CD14-positive monocyte (primary cell): ENCODE measurements at regions of chr2 and their contacts with region 1.

Region 1: GRCh38 chr2:73828818-73829570 is at the start of gene STAMBP:
- DNase-seq: peak; percentile 92 to 97 (median 95)
- H3K4me3 ChIP-seq: peak within 1 kb of the TSS; percentile 61 to 83 (median 69)
- H3K4me3 Mint-ChIP-seq: peak within 1 kb of the TSS; percentile 92 to 96
- H3K27ac ChIP-seq: peak within 1 kb of the TSS; percentile 79 to 94
- H3K27ac Mint-ChIP-seq: peak within 1 kb of the TSS; percentile 94 to 99 (median 98)
- H3K4me1 ChIP-seq: peaks cover 14 to 26% of the 10 kb centered on the region in 2 donors
- H3K4me1 Mint-ChIP-seq: peaks cover 25% of the 10 kb centered on the region
- H3K27me3 ChIP-seq: no peaks in the 10 kb centered on the region
- H3K27me3 Mint-ChIP-seq: peaks cover 0 to 2% (median 2%) of the 10 kb centered on the region in 3 donors
- CTCF ChIP-seq: no peak
- polyA plus RNA-seq, gene STAMBP: 26.0 to 40.8 (median 40.7) TPM

Region 2: DNA sequence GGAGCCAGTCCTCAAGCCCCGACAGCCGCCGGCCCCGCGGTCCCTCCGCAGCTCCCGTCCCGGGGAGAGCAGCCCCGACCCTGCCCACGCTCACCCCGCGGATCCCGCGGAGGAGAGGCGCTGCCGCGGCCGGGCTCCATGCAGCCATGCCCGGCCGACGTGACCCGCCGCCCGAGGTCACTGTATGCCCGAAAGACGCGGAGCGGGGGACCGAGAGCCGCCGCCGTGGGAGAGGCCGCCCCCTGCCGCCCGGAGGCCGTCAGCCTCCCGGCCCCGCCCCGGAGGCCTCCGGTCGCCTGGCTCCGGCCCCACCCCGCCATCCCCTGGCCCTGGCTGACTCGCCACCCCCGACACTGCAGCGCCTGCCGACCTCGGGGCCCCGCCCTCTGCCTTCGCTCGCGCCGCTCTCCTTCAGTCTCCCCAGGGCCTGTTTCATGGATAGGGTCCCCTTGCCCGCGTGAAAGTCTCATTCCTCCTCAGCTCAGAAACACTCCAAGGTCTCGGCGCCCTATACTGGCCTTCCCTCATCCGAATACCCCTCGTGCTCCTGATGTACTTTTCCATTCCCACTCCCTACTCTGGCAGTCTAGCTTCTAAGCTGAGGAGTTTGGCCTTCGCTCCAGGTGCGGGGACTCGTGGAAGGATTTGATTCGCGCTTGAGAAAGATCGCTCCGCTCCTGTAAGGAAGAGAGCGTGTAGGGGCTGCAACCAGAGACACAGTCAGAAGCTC is 318.9 kb after region 1 on chr2 and contains the start of gene BOLA3:
- intact Hi-C with region 1: loop called in 1 of 2 experiments (anchors 10 kb)
- DNase-seq: peak; percentile 70 to 75 (median 72)
- H3K4me3 ChIP-seq: peak within 1 kb of the TSS; percentile 43 to 89 (median 61)
- H3K4me3 Mint-ChIP-seq: no peak within 1 kb of the TSS
- H3K27ac ChIP-seq: peak within 1 kb of the TSS in 1 of 2 donors; percentile 67
- H3K27ac Mint-ChIP-seq: no peak within 1 kb of the TSS
- H3K4me1 ChIP-seq: peaks cover 17 to 21% of the 10 kb centered on the region in 2 donors
- H3K4me1 Mint-ChIP-seq: no peaks in the 10 kb centered on the region
- H3K27me3 ChIP-seq: no peaks in the 10 kb centered on the region
- H3K27me3 Mint-ChIP-seq: peaks cover 0 to 2% (median 0%) of the 10 kb centered on the region in 3 donors
- CTCF ChIP-seq: peak; percentile 80
- polyA plus RNA-seq, gene BOLA3: 3.9 to 8.0 (median 7.7) TPM

Region 3: GRCh38 chr2:74334931-74335333 is 505.9 kb after region 1 on chr2:
- intact Hi-C with region 1: loop called in 1 of 2 experiments (anchors 10 kb)
- DNase-seq: peak; percentile 44 to 60 (median 51)
- H3K4me3 ChIP-seq: no peak overlapping the region
- H3K4me3 Mint-ChIP-seq: no peak overlapping the region
- H3K27ac ChIP-seq: no peak overlapping the region
- H3K27ac Mint-ChIP-seq: no peak overlapping the region
- H3K4me1 ChIP-seq: no peaks in the 10 kb centered on the region
- H3K4me1 Mint-ChIP-seq: no peaks in the 10 kb centered on the region
- H3K27me3 ChIP-seq: no peaks in the 10 kb centered on the region
- H3K27me3 Mint-ChIP-seq: peaks cover 0 to 1% (median 0%) of the 10 kb centered on the region in 3 donors
- CTCF ChIP-seq: peak; percentile 99

Region 4: DNA sequence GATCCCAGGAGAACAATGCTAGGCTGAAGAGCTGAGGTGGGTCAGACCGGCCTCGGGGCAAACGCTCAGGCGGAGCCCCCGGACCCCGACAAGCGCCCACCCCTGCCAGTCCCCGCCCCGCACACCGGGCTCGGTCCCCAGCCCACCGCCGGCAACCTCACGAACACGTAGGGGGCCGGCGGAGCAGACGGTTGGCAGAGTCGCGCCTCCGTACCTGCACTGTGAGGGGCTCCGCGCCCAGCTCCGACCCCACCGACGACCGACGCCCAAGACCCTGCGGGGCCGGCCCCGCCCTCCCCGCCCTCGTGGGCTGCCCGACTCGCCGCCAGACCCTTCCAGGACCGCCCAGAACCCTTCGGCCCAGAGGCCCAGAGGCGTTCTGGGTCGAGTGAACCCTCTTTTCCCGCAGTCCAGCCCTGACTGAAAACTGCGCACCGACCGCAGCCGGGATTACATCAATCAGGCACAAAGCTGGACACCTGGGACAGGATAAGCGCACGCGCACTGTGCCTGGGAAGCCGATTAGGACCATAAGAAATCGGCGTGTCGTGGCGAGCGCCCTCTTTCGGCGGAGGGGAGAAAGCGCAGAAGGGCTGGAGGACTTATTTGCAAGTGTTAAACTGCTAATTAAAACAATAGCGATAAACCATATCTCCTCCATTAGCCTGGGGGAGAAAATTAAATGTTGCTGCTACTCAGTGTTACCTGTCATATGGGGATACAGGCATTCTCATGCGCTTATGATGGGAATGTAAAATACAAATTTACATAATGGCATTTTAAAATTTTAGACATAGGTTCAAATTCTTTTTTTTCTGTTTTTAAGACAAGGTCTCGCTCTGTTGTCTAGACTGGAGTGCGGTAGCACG is 562.8 kb after region 1 on chr2:
- intact Hi-C with region 1: loop called in 1 of 2 experiments (anchors 10 kb)
- DNase-seq: peak; percentile 92 to 93 (median 93)
- H3K4me3 ChIP-seq: peak overlapping the region; percentile 70 to 87 (median 74)
- H3K4me3 Mint-ChIP-seq: peak overlapping the region; percentile 93 to 95
- H3K27ac ChIP-seq: peak overlapping the region; percentile 51 to 93
- H3K27ac Mint-ChIP-seq: peak overlapping the region; percentile 96 to 100 (median 99)
- H3K4me1 ChIP-seq: peaks cover 9 to 16% of the 10 kb centered on the region in 2 donors
- H3K4me1 Mint-ChIP-seq: peaks cover 8% of the 10 kb centered on the region
- H3K27me3 ChIP-seq: no peaks in the 10 kb centered on the region
- H3K27me3 Mint-ChIP-seq: no peaks in the 10 kb centered on the region
- CTCF ChIP-seq: peak; percentile 96